Activated CD4-positive, alpha-beta T cell treated with anti-CD3 and anti-CD28 coated beads, Interleukin-2, amount 10 ng/mL, durations not matched to agents 24 days and 14 days (primary cell): ENCODE measurements at regions of chr9 and their contacts with region 1.

Region 1: DNA sequence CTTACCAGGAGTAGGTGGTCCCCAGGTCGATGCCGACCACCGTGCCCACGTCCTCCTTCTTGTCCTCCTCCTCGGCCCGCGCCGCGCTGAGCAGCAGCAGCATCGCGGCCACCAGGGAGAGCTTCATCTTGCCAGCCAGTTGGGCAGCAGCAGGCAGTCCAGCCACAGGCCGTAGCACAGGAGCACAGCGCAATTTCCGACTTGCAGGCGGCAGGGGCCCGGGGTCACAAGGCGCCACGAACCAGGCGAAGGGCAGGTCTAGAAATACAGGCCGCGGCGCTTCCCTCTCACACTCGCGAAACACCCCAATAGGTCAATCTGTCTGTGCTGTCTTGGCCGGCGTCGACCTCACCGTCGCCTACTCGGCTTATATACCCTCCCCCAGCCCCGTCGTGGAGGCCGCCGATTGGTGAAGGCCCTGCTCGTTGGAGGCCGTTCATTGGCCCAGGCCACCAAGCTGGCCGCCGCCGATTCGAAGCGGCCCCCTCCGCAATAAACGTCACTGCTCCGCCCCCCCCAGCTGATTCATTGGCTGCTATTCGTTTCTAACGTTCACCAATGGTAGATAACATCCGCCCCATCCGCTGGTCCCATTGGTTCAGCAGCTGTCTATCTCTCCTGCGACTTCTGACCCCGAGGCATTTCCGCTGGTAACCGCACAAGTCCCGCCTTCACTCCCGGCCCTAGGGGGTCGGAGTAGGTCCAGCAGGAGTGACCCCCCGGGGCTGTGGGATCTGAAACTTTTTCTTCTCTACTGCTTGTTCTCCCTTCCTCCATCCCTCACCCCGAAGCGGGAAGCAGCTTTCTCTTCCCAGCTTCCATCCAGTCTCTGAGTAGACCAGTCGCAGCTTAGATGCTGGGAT is at the start of gene HSPA5:
- DNase-seq: peak; percentile 100
- H3K4me3 Mint-ChIP-seq: peak within 1 kb of the TSS; percentile 93
- H3K27ac Mint-ChIP-seq: peak within 1 kb of the TSS; percentile 98
- H3K4me1 Mint-ChIP-seq: peaks cover 34% of the 10 kb centered on the region
- H3K27me3 Mint-ChIP-seq: peaks cover 2% of the 10 kb centered on the region
- total RNA-seq, gene HSPA5: 260 and 271 TPM in 2 replicates

Region 2: DNA sequence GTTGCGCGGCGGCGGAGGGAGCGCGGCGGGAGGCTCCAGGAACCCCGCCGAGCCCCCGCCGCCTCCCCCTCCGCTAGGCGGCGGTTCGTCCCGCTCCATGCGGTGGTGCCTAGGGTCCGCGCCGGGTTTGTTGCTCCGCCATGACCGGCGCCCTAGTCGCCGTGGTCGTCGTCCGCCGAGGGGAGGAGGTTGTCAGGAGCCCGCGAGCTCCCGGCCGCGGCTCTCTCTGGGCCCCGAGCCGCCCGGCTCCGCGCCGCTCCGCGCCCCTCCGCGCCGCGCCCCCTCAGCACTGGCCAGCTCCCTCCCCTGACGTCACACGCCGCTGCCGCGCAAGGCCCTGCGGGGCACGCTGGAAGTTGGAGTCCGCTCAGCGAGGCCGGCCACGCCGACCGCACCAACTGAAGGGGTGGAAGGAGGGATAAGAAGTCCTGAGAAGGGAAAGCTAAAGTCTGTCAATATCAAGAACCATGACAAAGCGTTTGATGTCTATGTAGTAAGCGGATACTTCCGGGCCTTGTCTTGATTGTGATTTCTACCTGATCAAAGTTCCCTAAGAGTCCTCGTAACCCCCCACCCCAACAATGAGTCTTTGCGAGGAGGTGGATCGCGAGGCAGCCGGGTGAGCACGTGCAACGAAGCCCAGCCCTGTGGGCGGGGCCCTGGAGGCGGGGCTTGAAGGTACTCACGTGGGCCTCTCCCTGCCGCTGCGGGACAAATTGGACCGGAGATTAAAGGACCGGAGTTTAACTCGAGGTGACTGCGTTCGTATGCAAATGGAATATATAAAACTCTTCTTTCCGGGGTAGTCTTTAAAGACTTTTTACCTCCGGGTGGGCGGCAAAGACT is 470.0 kb before region 1 on chr9 and contains the start of gene NR6A1:
- intact Hi-C with region 1: loop called (anchors 5 kb)
- DNase-seq: peak; percentile 99
- H3K4me3 Mint-ChIP-seq: peak within 1 kb of the TSS; percentile 91
- H3K27ac Mint-ChIP-seq: peak within 1 kb of the TSS; percentile 94
- H3K4me1 Mint-ChIP-seq: peaks cover 44% of the 10 kb centered on the region
- H3K27me3 Mint-ChIP-seq: peaks cover 63% of the 10 kb centered on the region
- total RNA-seq, gene NR6A1: 2.3 and 2.7 TPM in 2 replicates

Region 3: GRCh38 chr9:124940693-124941453 is 300.4 kb before region 1 on chr9 and contains the start of gene GOLGA1:
- intact Hi-C with region 1: loop called (anchors 1 kb)
- DNase-seq: peak; percentile 98
- H3K4me3 Mint-ChIP-seq: peak within 1 kb of the TSS; percentile 95
- H3K27ac Mint-ChIP-seq: peak within 1 kb of the TSS; percentile 99
- H3K4me1 Mint-ChIP-seq: peaks cover 21% of the 10 kb centered on the region
- H3K27me3 Mint-ChIP-seq: no peaks in the 10 kb centered on the region
- total RNA-seq, gene GOLGA1: 17.3 and 19.3 TPM in 2 replicates

Region 4: GRCh38 chr9:125189361-125190289 is 51.6 kb before region 1 on chr9 and contains the start of gene PPP6C:
- intact Hi-C with region 1: loop called (anchors 1 kb)
- DNase-seq: peak; percentile 99
- H3K4me3 Mint-ChIP-seq: peak within 1 kb of the TSS; percentile 98
- H3K27ac Mint-ChIP-seq: peak within 1 kb of the TSS; percentile 96
- H3K4me1 Mint-ChIP-seq: peaks cover 30% of the 10 kb centered on the region
- H3K27me3 Mint-ChIP-seq: no peaks in the 10 kb centered on the region
- total RNA-seq, gene PPP6C: 48.1 and 52.5 TPM in 2 replicates

Region 5: GRCh38 chr9:125261501-125262293 is 20.5 kb after region 1 on chr9 and contains the start of gene GAPVD1:
- intact Hi-C with region 1: loop called (anchors 1 kb)
- DNase-seq: peak; percentile 97
- H3K4me3 Mint-ChIP-seq: peak within 1 kb of the TSS; percentile 97
- H3K27ac Mint-ChIP-seq: peak within 1 kb of the TSS; percentile 94
- H3K4me1 Mint-ChIP-seq: peaks cover 31% of the 10 kb centered on the region
- H3K27me3 Mint-ChIP-seq: peaks cover 3% of the 10 kb centered on the region
- total RNA-seq, gene GAPVD1: 50.3 and 56.6 TPM in 2 replicates

Region 6: GRCh38 chr9:125374443-125375309 is 133.4 kb after region 1 on chr9:
- intact Hi-C with region 1: loop called (anchors 10 kb)
- DNase-seq: peak; percentile 90
- H3K4me3 Mint-ChIP-seq: peak overlapping the region; percentile 70
- H3K27ac Mint-ChIP-seq: no peak overlapping the region
- H3K4me1 Mint-ChIP-seq: peaks cover 4% of the 10 kb centered on the region
- H3K27me3 Mint-ChIP-seq: peaks cover 3% of the 10 kb centered on the region